ENCODE measurements at regions of chr12 and their contacts with region 1.

Region 1: GRCh38 chr12:751192-751998 is 984 bp upstream of the WNK1 start:
- DNase-seq: peak; percentile 92
- H3K4me3 ChIP-seq: peak overlapping the region; percentile 49 to 58 (median 57)
- H3K27ac ChIP-seq: peak overlapping the region; percentile 59
- H3K4me1 ChIP-seq: peaks cover 14% of the 10 kb centered on the region
- H3K27me3 ChIP-seq: no peaks in the 10 kb centered on the region
- CTCF ChIP-seq: peak; percentile 63 to 80

Region 2: GRCh38 chr12:575948-576612 is 175.3 kb before region 1 on chr12:
- CTCF ChIA-PET with region 1: interaction called, 15 read pairs
- dilution Hi-C with region 1: no loop called
- in situ Hi-C with region 1: loop called (anchors 5 to 10 kb)
- intact Hi-C with region 1: loop called (anchors 1 kb)
- DNase-seq: peak; percentile 64
- H3K4me3 ChIP-seq: no peak overlapping the region
- H3K27ac ChIP-seq: peak overlapping the region; percentile 85
- H3K4me1 ChIP-seq: peaks cover 39% of the 10 kb centered on the region
- H3K27me3 ChIP-seq: no peaks in the 10 kb centered on the region
- CTCF ChIP-seq: peak; percentile 89 to 98

Region 3: GRCh38 chr12:737122-737739 is 14.2 kb before region 1 on chr12:
- CTCF ChIA-PET with region 1: interaction called, 11 read pairs
- dilution Hi-C with region 1: no loop called
- in situ Hi-C with region 1: no loop called
- intact Hi-C with region 1: no loop called
- DNase-seq: no peak
- H3K4me3 ChIP-seq: no peak overlapping the region
- H3K27ac ChIP-seq: no peak overlapping the region
- H3K4me1 ChIP-seq: no peaks in the 10 kb centered on the region
- H3K27me3 ChIP-seq: no peaks in the 10 kb centered on the region
- CTCF ChIP-seq: no peak

Region 4: DNA sequence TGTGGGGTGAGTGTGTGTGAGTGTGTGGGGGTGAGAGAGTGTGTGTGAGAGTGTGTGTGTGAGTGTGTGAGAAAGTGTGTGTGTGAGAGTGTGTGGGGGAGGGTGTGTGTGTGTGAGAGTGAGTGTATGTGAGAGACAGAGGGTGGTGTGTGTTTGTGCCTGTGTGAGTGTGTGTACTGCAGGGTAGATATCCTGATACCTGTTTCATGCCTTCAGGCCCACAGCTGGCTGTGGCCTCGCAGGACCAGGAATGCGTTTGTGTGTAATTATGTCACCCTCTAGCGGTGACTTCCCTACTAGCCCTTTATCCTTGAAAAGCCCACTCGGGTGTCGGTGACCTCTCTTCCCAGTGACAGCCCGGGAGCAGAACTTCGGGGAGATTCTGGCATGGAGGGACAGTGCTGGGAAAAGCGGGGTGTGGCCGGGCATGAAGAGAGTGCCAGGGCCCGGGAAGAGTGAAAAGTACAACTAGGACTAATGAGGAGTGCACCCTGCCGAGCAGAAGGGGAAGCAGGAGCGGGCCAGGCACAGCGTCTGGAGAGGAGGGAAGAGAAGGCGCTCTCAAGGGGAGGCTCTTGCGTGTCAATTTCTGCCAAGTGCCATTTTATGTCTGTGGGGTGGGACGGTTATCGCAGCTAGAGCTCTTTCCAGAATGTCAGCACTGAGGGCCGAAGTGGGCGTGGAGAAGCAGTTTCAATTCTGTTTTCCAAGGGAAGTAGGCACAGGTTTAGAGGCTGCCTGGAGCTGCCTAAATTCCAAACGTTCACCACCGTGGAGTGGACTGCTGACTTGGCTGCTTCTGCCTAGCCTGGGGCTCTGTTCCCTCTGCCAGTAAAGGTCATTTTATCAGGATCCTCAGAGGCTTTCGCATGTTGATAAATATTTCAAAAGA is 854.0 kb after region 1 on chr12:
- CTCF ChIA-PET with region 1: no interaction called
- dilution Hi-C with region 1: no loop called
- in situ Hi-C with region 1: no loop called
- intact Hi-C with region 1: loop called (anchors 10 kb)
- DNase-seq: peak; percentile 77
- H3K4me3 ChIP-seq: peak overlapping the region; percentile 30 to 47 (median 41)
- H3K27ac ChIP-seq: peak overlapping the region; percentile 61
- H3K4me1 ChIP-seq: peaks cover 23% of the 10 kb centered on the region
- H3K27me3 ChIP-seq: no peaks in the 10 kb centered on the region
- CTCF ChIP-seq: peak; percentile 70 to 80

Measured in mammary epithelial cell (primary cell).